ENCODE measurements at regions of chr20 and their contacts with region 1.

Region 1: GRCh38 chr20:34709044-34709830 is 5.1 kb downstream of the TP53INP2 start:
- DNase-seq: peak; percentile 77 to 87 (median 80)
- H3K4me3 ChIP-seq: peak overlapping the region; percentile 76
- H3K4me3 Mint-ChIP-seq: peak overlapping the region; percentile 86 to 96 (median 90)
- H3K27ac ChIP-seq: peak overlapping the region; percentile 79
- H3K27ac Mint-ChIP-seq: peak overlapping the region; percentile 82 to 99 (median 92)
- H3K4me1 ChIP-seq: peaks cover 14% of the 10 kb centered on the region
- H3K4me1 Mint-ChIP-seq: peaks cover 14 to 34% (median 19%) of the 10 kb centered on the region in 3 donors
- H3K27me3 ChIP-seq: no peaks in the 10 kb centered on the region
- H3K27me3 Mint-ChIP-seq: peaks cover 0 to 5% of the 10 kb centered on the region in 2 donors

Region 2: GRCh38 chr20:34538671-34539123 is 170.5 kb before region 1 on chr20:
- CTCF ChIA-PET with region 1: interaction called, 20 read pairs
- POLR2A ChIA-PET with region 1: no interaction called
- DNase-seq: peak; percentile 25 to 69 (median 38)
- H3K4me3 ChIP-seq: no peak overlapping the region
- H3K4me3 Mint-ChIP-seq: no peak overlapping the region
- H3K27ac ChIP-seq: no peak overlapping the region
- H3K27ac Mint-ChIP-seq: peak overlapping the region in 6 of 8 donors; percentile 56 to 80 (median 69)
- H3K4me1 ChIP-seq: peaks cover 13% of the 10 kb centered on the region
- H3K4me1 Mint-ChIP-seq: peaks cover 18 to 38% (median 25%) of the 10 kb centered on the region in 3 donors
- H3K27me3 ChIP-seq: no peaks in the 10 kb centered on the region
- H3K27me3 Mint-ChIP-seq: no peaks in the 10 kb centered on the region

Region 3: GRCh38 chr20:34744847-34745246 is 35.6 kb after region 1 on chr20:
- CTCF ChIA-PET with region 1: no interaction called
- POLR2A ChIA-PET with region 1: no interaction called
- DNase-seq: no peak
- H3K4me3 ChIP-seq: no peak overlapping the region
- H3K4me3 Mint-ChIP-seq: no peak overlapping the region
- H3K27ac ChIP-seq: no peak overlapping the region
- H3K27ac Mint-ChIP-seq: peak overlapping the region in 1 of 8 donors; percentile 22
- H3K4me1 ChIP-seq: no peaks in the 10 kb centered on the region
- H3K4me1 Mint-ChIP-seq: no peaks in the 10 kb centered on the region
- H3K27me3 ChIP-seq: no peaks in the 10 kb centered on the region
- H3K27me3 Mint-ChIP-seq: no peaks in the 10 kb centered on the region

Measured in CD8-positive, alpha-beta memory T cell (primary cell).